ENCODE measurements at regions of chr2 and their contacts with region 1.

Region 1: DNA sequence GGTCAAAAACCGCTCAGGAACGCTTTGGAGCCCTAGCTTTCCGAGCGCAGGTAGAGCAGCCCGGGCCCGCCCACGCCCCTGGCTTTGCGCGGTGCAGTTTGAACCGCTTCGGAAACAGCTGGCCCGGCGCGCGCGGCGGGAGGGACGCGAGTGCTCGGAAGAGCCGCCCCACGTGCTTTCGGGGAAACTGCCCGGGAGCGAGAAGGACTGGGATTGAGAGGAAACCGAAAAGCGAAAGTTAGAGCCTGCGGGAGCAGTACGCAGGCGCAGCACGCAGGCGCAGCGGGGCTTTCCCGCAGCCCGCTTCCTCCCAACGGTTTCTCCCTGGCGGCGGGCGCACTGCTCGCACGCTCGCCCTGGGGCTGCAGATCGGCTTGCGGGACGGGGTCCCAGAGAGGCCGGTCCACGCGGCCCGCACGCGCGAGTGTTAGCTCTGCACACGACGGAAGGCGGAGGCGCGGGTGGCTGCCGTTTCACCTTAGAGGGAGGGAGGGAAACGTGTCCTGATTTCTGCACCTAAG is 6.3 kb upstream of the STAT1 start:
- DNase-seq: peak; percentile 97
- H3K4me3 Mint-ChIP-seq: no peak overlapping the region
- H3K27ac Mint-ChIP-seq: no peak overlapping the region
- H3K4me1 Mint-ChIP-seq: no peaks in the 10 kb centered on the region
- H3K27me3 Mint-ChIP-seq: peaks cover 11% of the 10 kb centered on the region
- CTCF ChIP-seq: no peak

Region 2: GRCh38 chr2:190887089-190887488 is 133.2 kb before region 1 on chr2:
- CTCF ChIA-PET with region 1: no interaction called
- POLR2A ChIA-PET with region 1: interaction called, 44 read pairs
- intact Hi-C with region 1: no loop called
- DNase-seq: peak; percentile 64
- H3K4me3 Mint-ChIP-seq: no peak overlapping the region
- H3K27ac Mint-ChIP-seq: no peak overlapping the region
- H3K4me1 Mint-ChIP-seq: peaks cover 40% of the 10 kb centered on the region
- H3K27me3 Mint-ChIP-seq: no peaks in the 10 kb centered on the region
- CTCF ChIP-seq: no peak

Region 3: DNA sequence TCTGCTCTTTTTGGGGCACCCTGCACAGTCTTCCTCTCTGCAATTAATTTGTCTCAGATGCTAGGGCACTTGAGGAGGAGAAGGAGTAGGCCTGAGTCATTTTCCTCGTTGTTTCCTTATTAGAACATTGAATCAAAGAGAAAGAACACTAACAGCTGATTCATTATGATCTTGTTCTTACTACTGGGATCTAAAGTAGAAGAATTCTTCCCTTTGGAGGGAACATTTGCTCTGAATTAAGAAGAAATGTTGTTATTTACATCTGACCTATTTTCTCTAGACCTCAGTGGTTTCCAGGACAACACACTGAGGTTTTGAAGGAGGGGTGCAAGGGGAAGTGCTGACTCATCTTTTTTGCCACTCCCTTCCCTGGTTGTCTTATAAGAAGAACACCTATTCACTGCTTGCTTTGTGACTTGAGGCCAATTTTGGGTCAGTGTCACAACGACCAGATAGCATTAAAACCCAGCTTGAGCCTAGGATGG is 18.0 kb after region 1 on chr2:
- CTCF ChIA-PET with region 1: no interaction called
- POLR2A ChIA-PET with region 1: interaction called, 23 read pairs
- intact Hi-C with region 1: no loop called
- DNase-seq: peak; percentile 35
- H3K4me3 Mint-ChIP-seq: no peak overlapping the region
- H3K27ac Mint-ChIP-seq: peak overlapping the region; percentile 74
- H3K4me1 Mint-ChIP-seq: peaks cover 19% of the 10 kb centered on the region
- H3K27me3 Mint-ChIP-seq: no peaks in the 10 kb centered on the region
- CTCF ChIP-seq: no peak

Measured in MCF 10A (cell line).